ENCODE measurements at regions of chr20 and their contacts with region 1.

Region 1: DNA sequence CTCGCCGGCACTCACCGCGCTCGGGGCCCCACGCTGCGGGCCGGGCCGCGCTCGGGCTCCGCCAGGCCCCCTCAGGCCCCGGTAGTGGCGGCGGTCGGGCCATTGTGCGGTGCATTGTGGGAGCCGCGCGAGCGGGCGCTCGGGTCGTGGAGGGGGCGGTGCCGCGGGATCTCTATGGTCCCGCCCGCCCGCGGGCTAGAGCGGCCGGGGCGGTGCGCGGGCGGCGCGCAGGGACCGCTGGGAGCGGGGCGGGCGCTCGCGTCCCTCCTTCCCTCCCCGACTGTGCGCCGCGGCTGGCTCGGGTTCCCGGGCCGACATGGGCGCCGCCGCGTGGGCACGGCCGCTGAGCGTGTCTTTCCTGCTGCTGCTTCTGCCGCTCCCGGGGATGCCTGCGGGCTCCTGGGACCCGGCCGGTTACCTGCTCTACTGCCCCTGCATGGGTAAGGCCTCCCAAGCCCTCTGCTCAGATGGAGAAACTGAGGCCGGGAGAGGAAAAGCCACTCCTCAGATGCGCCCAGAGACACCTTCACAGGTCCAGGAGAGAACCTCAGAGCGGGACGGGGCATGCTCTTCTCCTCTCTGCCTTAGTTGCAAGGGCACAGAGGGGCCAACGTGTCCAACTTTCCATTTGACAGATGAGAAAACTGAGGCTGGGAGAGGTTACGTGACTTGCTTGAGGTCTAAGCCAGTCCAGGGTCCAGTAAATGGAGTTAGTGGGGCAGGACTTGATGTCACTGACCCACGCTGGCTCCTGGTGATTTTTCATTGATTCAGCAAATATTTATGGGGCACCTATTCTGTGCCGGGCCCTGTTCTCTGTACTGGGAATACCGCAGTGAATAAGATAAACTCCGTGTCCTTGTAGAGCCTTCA is at the starts of genes PLAGL2 and POFUT1:
- DNase-seq: peak; percentile 95
- ATAC-seq: peak; percentile 68
- H3K4me3 Mint-ChIP-seq: peak within 1 kb of the TSS; percentile 99
- H3K27ac Mint-ChIP-seq: peak within 1 kb of the TSS; percentile 99
- H3K4me1 Mint-ChIP-seq: peaks cover 63% of the 10 kb centered on the region
- H3K27me3 Mint-ChIP-seq: no peaks in the 10 kb centered on the region
- total RNA-seq, gene PLAGL2: 89.1 to 98.2 TPM
- total RNA-seq, gene POFUT1: 51.8 to 54.3 TPM

Region 2: GRCh38 chr20:31879143-31879987 is 328.5 kb before region 1 on chr20:
- CTCF ChIA-PET with region 1: no interaction called
- POLR2A ChIA-PET with region 1: no interaction called
- intact Hi-C with region 1: loop called in 1 of 2 experiments (anchors 1 kb)
- DNase-seq: peak; percentile 90
- ATAC-seq: peak; percentile 94
- H3K4me3 Mint-ChIP-seq: peak overlapping the region; percentile 84
- H3K27ac Mint-ChIP-seq: peak overlapping the region; percentile 45
- H3K4me1 Mint-ChIP-seq: peaks cover 8% of the 10 kb centered on the region
- H3K27me3 Mint-ChIP-seq: no peaks in the 10 kb centered on the region

Region 3: GRCh38 chr20:32249030-32249738 is 41.3 kb after region 1 on chr20:
- CTCF ChIA-PET with region 1: interaction called, 3 read pairs
- POLR2A ChIA-PET with region 1: interaction called, 4 read pairs
- intact Hi-C with region 1: loop called (anchors 1 kb)
- DNase-seq: peak; percentile 60
- ATAC-seq: peak; percentile 67
- H3K4me3 Mint-ChIP-seq: peak overlapping the region; percentile 28
- H3K27ac Mint-ChIP-seq: peak overlapping the region; percentile 84
- H3K4me1 Mint-ChIP-seq: peaks cover 75% of the 10 kb centered on the region
- H3K27me3 Mint-ChIP-seq: no peaks in the 10 kb centered on the region

Region 4: DNA sequence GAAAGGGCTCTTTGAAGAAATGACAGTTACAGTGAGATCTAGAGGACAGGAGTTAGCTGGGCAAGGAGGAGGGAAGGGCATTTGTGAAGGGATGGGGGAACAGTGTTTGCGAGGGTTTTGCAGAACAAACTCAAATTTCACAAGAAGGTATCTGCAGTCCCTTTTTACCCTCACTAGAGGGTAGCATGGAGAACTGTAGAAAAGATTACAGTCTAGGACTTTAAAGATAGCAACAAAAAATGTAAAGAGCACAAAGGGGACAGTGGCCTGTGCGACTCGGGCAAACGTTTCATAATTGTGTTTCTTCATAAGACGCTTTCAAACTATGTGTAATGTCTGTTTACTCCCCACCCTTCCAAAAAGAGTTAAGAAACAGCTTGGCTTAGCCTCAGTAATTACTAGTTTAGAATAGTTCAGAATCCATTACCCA is 129.1 kb after region 1 on chr20:
- CTCF ChIA-PET with region 1: interaction called, 3 read pairs
- POLR2A ChIA-PET with region 1: interaction called, 6 read pairs
- intact Hi-C with region 1: loop called (anchors 1 kb)
- DNase-seq: no peak
- ATAC-seq: no peak
- H3K4me3 Mint-ChIP-seq: no peak overlapping the region
- H3K27ac Mint-ChIP-seq: no peak overlapping the region
- H3K4me1 Mint-ChIP-seq: peaks cover 41% of the 10 kb centered on the region
- H3K27me3 Mint-ChIP-seq: no peaks in the 10 kb centered on the region

Region 5: DNA sequence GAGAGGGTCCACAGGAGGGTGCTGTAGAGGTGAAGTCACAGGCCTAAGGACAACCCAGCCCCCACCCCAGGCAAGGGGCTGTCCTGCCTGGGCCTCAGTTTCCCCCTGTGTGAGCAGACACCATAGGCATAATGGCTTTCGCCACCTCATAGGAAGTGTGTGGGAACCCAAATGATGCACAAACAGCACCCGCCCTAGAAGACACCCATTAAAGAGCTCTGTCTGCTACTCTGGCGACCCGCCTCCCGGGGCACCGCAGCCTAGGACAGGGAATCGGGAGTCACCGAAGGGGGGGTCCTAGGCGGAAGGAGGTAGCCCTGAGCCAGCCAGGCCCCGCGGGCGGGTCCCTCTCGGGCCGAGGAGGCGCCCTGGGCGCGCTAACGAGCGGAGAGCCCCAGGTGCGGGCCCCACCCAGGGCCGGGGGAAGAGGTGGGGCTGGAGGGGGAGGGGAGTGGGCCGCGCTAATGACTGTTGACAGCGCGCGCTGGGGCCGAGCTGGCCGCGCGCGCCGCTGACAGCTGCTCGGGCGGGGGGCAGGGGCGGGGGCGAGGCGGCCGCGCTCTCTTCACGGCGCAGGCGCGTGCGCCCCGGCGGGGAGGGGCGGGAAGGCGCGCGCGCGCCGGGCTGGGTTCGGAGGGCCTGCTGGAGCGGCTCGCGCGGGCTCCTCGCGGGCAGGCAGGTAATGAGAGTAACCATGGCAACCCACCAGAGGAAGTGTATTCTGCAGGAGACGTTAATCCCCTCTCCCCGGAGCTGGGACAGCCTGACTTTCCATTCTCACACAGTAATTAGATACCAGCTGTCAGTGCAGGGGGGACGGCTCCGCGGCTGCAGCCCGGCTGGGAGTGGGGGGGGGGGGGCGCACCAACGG is 328.3 kb after region 1 on chr20:
- CTCF ChIA-PET with region 1: no interaction called
- POLR2A ChIA-PET with region 1: no interaction called
- intact Hi-C with region 1: loop called in 1 of 2 experiments (anchors 2 kb)
- DNase-seq: peak; percentile 88
- ATAC-seq: peak; percentile 27
- H3K4me3 Mint-ChIP-seq: peak overlapping the region; percentile 72
- H3K27ac Mint-ChIP-seq: peak overlapping the region; percentile 95
- H3K4me1 Mint-ChIP-seq: peaks cover 82% of the 10 kb centered on the region
- H3K27me3 Mint-ChIP-seq: no peaks in the 10 kb centered on the region